ENCODE measurements at regions of chr1 and their contacts with region 1.

Region 1: DNA sequence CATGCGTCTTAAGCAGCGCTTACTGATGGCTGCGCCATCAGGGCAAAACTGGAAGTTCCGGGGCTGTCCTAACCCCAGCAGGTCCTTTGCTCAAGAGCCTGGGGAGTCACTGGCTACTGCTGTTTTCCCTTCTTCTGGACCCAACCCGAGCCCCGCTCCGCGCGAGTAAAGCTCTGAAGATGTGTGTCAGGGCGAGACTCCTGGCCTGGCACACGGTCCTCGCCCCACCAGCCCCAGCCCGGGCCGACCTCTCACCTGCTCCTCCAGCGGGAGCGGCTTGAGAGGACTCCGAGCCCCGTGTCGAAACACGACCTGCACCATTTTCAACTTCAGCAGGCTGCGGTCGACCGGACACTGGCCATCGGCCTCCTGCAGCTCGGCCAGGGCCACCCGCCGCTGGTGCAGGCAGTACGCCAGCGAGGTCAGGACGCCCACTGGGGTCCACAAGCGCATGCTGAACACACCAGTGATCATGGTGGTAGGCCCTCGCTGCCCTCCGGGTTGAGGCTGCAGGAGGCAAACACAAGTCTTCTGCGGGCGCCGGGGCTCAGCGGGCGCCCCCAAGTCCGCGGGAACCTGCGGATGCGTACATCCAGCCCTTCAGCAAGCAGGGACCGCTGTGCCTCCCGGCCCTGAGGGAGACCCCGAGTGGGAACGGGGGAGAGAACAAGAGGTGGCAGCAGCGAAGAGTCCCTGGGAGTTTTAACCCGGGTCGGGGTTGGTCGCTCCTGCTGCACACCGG is 578 bp downstream of the ACP6 start:
- DNase-seq: peak; percentile 64
- CTCF ChIP-seq: no peak

Region 2: GRCh38 chr1:147599362-147600118 is 70.2 kb before region 1 on chr1:
- in situ Hi-C with region 1: loop called (anchors 10 kb)
- DNase-seq: peak; percentile 96
- CTCF ChIP-seq: no peak